ENCODE measurements at regions of chr16 and their contacts with region 1.

Region 1: DNA sequence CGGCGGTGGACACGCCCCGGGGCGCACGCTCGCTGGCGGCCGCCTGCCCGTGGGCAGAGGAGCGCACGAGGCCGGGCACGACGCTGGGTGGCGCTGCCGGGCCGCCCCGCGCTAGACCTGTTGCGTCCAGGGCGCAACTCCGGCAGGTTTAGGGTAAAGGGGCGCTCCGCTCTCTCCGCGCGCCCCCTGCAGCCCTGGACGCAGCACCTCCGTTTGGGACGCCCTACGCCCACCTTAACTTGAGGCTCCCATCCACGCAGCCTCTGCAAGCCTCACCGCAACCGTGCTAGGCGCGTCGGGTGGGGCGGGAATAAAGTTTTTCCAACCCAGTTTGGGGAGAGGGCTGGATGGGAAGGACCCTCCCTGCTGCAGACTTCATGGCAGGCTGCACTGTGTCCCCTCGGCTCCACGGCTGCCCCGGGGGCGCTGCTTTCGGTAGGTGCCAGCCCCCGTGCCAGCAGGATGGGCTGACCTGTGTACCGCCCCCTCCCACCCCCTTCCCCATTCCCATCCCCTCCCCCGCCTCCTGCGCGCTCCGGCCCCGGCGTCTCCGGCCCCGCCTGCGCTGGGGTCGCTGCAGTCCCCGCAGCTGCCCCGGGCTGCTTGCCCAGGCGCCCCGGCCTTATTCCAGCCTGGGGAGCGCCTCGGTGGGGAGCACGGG is at the start of gene SYT17:
- DNase-seq: peak; percentile 64 to 86 (median 71)
- ATAC-seq: peak in 3 of 4 donors; percentile 88 to 93 (median 93)
- H3K4me3 ChIP-seq: peak within 1 kb of the TSS; percentile 43 to 69 (median 58)
- H3K27ac ChIP-seq: peak within 1 kb of the TSS in 8 of 12 donors; percentile 9 to 63 (median 45)
- H3K4me1 ChIP-seq: peaks cover 0 to 21% (median 6%) of the 10 kb centered on the region in 12 donors
- H3K27me3 ChIP-seq: peaks cover 0 to 35% (median 15%) of the 10 kb centered on the region in 9 donors
- CTCF ChIP-seq: peak; percentile 60 to 82 (median 72)
- POLR2A ChIP-seq: no peak
- total RNA-seq, gene SYT17: 0.23 to 5.2 (median 0.76) TPM

Region 2: GRCh38 chr16:19113453-19114351 is 54.1 kb before region 1 on chr16 and contains the start of gene ITPRIPL2:
- intact Hi-C with region 1: loop called in 1 of 10 experiments (anchors 10 kb)
- DNase-seq: peak; percentile 92 to 96 (median 94)
- ATAC-seq: peak; percentile 88 to 94 (median 93)
- H3K4me3 ChIP-seq: peak within 1 kb of the TSS; percentile 59 to 94 (median 82)
- H3K27ac ChIP-seq: peak within 1 kb of the TSS; percentile 91 to 99 (median 96)
- H3K4me1 ChIP-seq: peaks cover 3 to 56% (median 42%) of the 10 kb centered on the region in 12 donors
- H3K27me3 ChIP-seq: peaks cover 0 to 8% (median 0%) of the 10 kb centered on the region in 9 donors
- CTCF ChIP-seq: peak in 2 of 12 donors; percentile 11 to 31
- POLR2A ChIP-seq: peak in 1 of 2 donors; percentile 48
- total RNA-seq, gene ITPRIPL2: 11.0 to 43.2 (median 16.3) TPM

Region 3: GRCh38 chr16:19330841-19331397 is 163.1 kb after region 1 on chr16:
- intact Hi-C with region 1: no loop called
- DNase-seq: no peak
- ATAC-seq: no peak
- H3K4me3 ChIP-seq: no peak overlapping the region
- H3K27ac ChIP-seq: no peak overlapping the region
- H3K4me1 ChIP-seq: no peaks in the 10 kb centered on the region
- H3K27me3 ChIP-seq: peaks cover 0 to 4% (median 0%) of the 10 kb centered on the region in 9 donors
- CTCF ChIP-seq: no peak
- POLR2A ChIP-seq: no peak

Region 4: GRCh38 chr16:19375561-19376158 is 207.8 kb after region 1 on chr16:
- intact Hi-C with region 1: loop called in 7 of 10 experiments (anchors 2 to 10 kb)
- DNase-seq: peak in 3 of 5 donors; percentile 19 to 32 (median 28)
- ATAC-seq: peak in 3 of 4 donors; percentile 59 to 75 (median 71)
- H3K4me3 ChIP-seq: no peak overlapping the region
- H3K27ac ChIP-seq: no peak overlapping the region
- H3K4me1 ChIP-seq: peaks cover 0 to 3% (median 0%) of the 10 kb centered on the region in 12 donors
- H3K27me3 ChIP-seq: no peaks in the 10 kb centered on the region
- CTCF ChIP-seq: peak; percentile 77 to 93 (median 82)
- POLR2A ChIP-seq: no peak

Region 5: GRCh38 chr16:19502395-19503131 is 334.7 kb after region 1 on chr16:
- intact Hi-C with region 1: loop called in 2 of 10 experiments (anchors 5 to 10 kb)
- DNase-seq: peak in 4 of 5 donors; percentile 57 to 69 (median 60)
- ATAC-seq: peak in 3 of 4 donors; percentile 63 to 72 (median 65)
- H3K4me3 ChIP-seq: no peak overlapping the region
- H3K27ac ChIP-seq: no peak overlapping the region
- H3K4me1 ChIP-seq: peaks cover 0 to 12% (median 2%) of the 10 kb centered on the region in 12 donors
- H3K27me3 ChIP-seq: no peaks in the 10 kb centered on the region
- CTCF ChIP-seq: peak; percentile 55 to 79 (median 68)
- POLR2A ChIP-seq: no peak